B cell (primary cell): ENCODE measurements at regions of chr19 and their contacts with region 1.

Region 1: DNA sequence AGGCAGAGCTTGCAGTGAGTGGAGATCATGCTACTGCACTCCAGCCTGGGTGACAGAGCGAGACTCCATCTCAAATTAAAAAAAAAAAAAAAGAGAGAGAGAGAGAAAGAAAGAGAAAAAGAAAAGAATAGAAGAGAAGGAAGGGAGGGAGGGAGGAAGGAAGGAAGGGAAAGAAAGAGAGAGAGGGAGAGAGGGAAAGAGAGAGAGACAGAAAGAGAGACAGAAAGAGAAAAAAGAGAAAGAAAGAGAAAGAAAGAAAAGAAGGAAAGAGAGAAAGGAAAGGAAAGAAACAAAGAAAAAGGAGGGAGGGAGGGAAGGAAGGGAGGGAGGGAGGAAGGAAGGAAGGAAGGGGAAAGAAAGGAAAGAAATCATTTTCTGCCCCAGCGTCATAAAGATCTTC is 7.0 kb upstream of the UNC13A start:
- DNase-seq: no peak
- ATAC-seq: no peak
- H3K4me3 ChIP-seq: no peak overlapping the region
- H3K4me3 Mint-ChIP-seq: no peak overlapping the region
- H3K27ac ChIP-seq: no peak overlapping the region
- H3K27ac Mint-ChIP-seq: no peak overlapping the region
- H3K4me1 ChIP-seq: no peaks in the 10 kb centered on the region
- H3K4me1 Mint-ChIP-seq: no peaks in the 10 kb centered on the region
- H3K27me3 ChIP-seq: peaks cover 0 to 18% (median 3%) of the 10 kb centered on the region in 4 experiments
- H3K27me3 Mint-ChIP-seq: peaks cover 48% of the 10 kb centered on the region
- CTCF ChIP-seq: peak; percentile 14

Region 2: GRCh38 chr19:17761148-17761547 is 66.0 kb after region 1 on chr19:
- CTCF ChIA-PET with region 1: interaction called, 137 read pairs
- POLR2A ChIA-PET with region 1: interaction called, 10 read pairs
- intact Hi-C with region 1: no loop called
- DNase-seq: no peak
- ATAC-seq: no peak
- H3K4me3 ChIP-seq: no peak overlapping the region
- H3K4me3 Mint-ChIP-seq: no peak overlapping the region
- H3K27ac ChIP-seq: no peak overlapping the region
- H3K27ac Mint-ChIP-seq: peak overlapping the region; percentile 28
- H3K4me1 ChIP-seq: peaks cover 22 to 28% of the 10 kb centered on the region in 2 donors
- H3K4me1 Mint-ChIP-seq: peaks cover 55% of the 10 kb centered on the region
- H3K27me3 ChIP-seq: no peaks in the 10 kb centered on the region
- H3K27me3 Mint-ChIP-seq: no peaks in the 10 kb centered on the region
- CTCF ChIP-seq: no peak

Region 3: GRCh38 chr19:17909003-17909732 is 214.0 kb after region 1 on chr19:
- CTCF ChIA-PET with region 1: no interaction called
- POLR2A ChIA-PET with region 1: no interaction called
- intact Hi-C with region 1: no loop called
- DNase-seq: no peak
- ATAC-seq: no peak
- H3K4me3 ChIP-seq: no peak overlapping the region
- H3K4me3 Mint-ChIP-seq: no peak overlapping the region
- H3K27ac ChIP-seq: no peak overlapping the region
- H3K27ac Mint-ChIP-seq: no peak overlapping the region
- H3K4me1 ChIP-seq: no peaks in the 10 kb centered on the region
- H3K4me1 Mint-ChIP-seq: no peaks in the 10 kb centered on the region
- H3K27me3 ChIP-seq: peaks cover 0 to 3% (median 0%) of the 10 kb centered on the region in 4 experiments
- H3K27me3 Mint-ChIP-seq: peaks cover under 1% of the 10 kb centered on the region
- CTCF ChIP-seq: no peak